Vagina (tissue), 2 donors: ENCODE measurements at regions of chr5 and their contacts with region 1.

Region 1: DNA sequence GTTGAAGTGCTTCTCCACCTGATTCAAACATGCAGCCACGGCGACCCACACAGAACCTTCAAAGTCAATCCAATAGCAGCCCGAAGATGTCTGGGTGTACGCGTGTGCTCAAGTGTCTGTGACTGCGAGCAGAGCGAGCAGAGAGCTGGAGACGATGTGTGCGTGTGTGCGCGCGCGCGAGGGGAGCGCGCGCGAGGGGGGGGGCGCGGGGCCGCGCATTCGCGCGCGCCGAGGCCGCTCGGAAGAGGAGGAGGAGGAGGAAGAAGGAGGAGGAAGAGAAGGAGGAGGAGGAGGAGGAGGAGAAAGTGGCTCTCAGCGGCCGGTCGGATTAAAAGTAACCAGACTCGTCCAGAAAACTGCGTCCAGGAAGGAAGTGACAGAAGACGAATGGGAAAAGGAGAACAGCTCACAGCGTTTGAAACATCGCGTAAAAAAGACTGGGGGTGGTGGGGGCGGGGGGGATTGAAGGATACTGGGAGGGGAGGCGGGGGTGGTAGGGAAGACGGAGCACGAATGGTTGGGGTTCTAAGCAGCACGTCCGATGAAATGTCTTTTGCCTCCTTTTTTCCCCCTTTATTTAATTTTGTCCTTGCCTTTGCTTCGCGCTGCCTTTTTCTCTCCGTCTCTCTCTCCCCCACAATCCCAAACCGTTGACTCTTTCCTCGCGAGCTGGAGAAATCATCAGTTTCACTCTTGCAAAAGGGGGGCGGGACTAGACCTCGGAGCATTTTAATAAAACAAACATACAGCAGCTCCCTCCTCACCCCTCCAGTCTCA is at the start of gene MEF2C:
- DNase-seq: peak in 1 of 2 donors; percentile 90
- H3K4me3 ChIP-seq: peak within 1 kb of the TSS; percentile 48 to 67
- H3K27ac ChIP-seq: peak within 1 kb of the TSS; percentile 89
- H3K4me1 ChIP-seq: no peaks in the 10 kb centered on the region
- H3K27me3 ChIP-seq: no peaks in the 10 kb centered on the region
- CTCF ChIP-seq: no peak
- POLR2A ChIP-seq: peak in 1 of 2 donors; percentile 66
- total RNA-seq, gene MEF2C: 22.3 TPM

Region 2: GRCh38 chr5:88729084-88729828 is 154.0 kb before region 1 on chr5:
- intact Hi-C with region 1: loop called (anchors 10 kb)
- DNase-seq: no peak
- H3K4me3 ChIP-seq: no peak overlapping the region
- H3K27ac ChIP-seq: no peak overlapping the region
- H3K4me1 ChIP-seq: no peaks in the 10 kb centered on the region
- H3K27me3 ChIP-seq: no peaks in the 10 kb centered on the region
- CTCF ChIP-seq: peak; percentile 66 to 74 (median 67)
- POLR2A ChIP-seq: no peak

Region 3: DNA sequence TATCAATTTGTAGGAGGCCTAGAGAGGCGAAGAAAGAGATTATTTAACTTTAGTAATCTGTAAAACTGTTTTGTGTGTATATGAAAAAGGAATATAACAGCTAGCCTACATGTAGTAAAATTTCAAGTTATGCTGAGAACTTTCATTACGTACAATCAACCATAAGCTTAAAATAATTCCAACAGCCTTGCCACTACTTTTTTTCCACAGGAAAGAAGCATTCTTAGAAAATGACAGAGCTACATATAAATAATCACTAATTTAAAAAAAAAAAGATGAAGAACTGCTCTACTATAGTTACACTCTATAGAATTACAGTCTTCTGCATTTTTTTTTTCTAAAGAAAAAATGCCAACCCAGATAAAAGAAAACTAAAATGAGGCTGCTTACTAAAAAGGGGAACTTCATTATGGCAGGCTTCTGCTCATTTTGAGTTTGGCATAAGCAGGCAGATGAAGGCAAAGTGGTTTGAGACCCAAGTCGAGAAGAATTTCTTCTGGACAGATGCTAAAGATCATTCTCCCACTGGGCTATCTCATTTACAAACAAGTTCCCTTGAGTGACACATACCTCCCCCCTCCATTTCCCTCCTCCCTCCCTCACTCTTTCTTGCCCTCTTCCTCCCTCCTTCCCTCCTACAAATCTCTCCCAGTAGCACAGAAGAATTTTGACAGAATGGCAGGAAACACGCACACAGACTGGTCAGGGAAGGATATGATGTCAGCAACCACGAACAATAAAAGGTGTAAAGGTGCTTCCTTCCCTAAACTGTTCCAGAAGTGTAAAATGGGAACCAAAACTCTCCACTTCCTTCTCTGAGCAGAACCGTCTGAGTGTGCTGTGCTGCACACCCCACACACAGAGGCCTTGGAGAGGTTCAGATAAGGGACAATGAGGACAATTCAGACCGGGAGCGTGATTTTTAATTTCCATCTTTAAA is 56.3 kb before region 1 on chr5:
- intact Hi-C with region 1: loop called (anchors 5 kb)
- DNase-seq: no peak
- H3K4me3 ChIP-seq: no peak overlapping the region
- H3K27ac ChIP-seq: peak overlapping the region; percentile 60
- H3K4me1 ChIP-seq: no peaks in the 10 kb centered on the region
- H3K27me3 ChIP-seq: no peaks in the 10 kb centered on the region
- CTCF ChIP-seq: no peak
- POLR2A ChIP-seq: no peak